Vagina (tissue), 2 donors: ENCODE measurements at regions of chr6 and their contacts with region 1.

Region 1: GRCh38 chr6:92109956-92110355 is 1309.4 kb downstream of the EPHA7 start:
- DNase-seq: no peak
- H3K4me3 ChIP-seq: no peak overlapping the region
- H3K27ac ChIP-seq: no peak overlapping the region
- H3K4me1 ChIP-seq: no peaks in the 10 kb centered on the region
- H3K27me3 ChIP-seq: no peaks in the 10 kb centered on the region
- CTCF ChIP-seq: no peak
- POLR2A ChIP-seq: no peak

Region 2: DNA sequence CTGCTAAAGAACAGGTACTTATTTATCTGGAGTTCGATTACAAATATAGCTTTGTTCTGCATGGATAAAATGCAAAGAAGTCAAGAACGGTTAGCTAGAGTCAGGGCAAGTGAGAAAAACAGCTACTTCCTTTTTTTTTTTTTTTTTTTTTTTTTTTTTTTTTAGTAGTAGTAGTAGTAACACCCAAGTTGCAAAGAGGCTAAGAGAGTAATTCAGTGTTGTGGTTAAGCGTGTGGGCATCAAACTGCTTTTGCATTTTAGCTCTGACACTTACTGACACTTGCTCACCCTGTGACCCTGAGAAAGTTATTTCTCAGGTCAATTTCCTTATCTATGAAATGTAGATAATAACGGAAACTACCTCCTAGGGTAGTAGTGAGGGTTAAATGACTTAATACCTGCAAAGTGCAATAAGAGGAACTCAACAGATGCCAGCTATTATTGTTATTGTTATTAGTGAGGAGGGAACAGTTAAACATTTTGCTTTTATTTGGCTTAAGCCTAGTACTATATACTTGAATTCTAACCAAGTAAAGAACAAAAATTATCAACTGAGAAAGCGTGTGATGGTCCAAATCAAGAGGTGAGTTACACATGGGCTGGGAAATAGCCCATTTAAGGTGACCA is 1726.6 kb before region 1 on chr6:
- intact Hi-C with region 1: loop called (anchors 10 kb)
- DNase-seq: no peak
- H3K4me3 ChIP-seq: no peak overlapping the region
- H3K27ac ChIP-seq: no peak overlapping the region
- H3K4me1 ChIP-seq: no peaks in the 10 kb centered on the region
- H3K27me3 ChIP-seq: no peaks in the 10 kb centered on the region
- CTCF ChIP-seq: no peak
- POLR2A ChIP-seq: no peak